WTC11 (cell line): ENCODE measurements at regions of chr22 and their contacts with region 1.

Region 1: GRCh38 chr22:39306581-39307361 is 12.7 kb downstream of the RPL3 start:
- DNase-seq: peak; percentile 78
- ATAC-seq: peak; percentile 1; the same call in 1 of the 2 replicates
- H3K4me3 Mint-ChIP-seq: no peak overlapping the region
- H3K27ac Mint-ChIP-seq: peak overlapping the region; percentile 55
- H3K4me1 Mint-ChIP-seq: peaks cover 25% of the 10 kb centered on the region
- H3K27me3 Mint-ChIP-seq: no peaks in the 10 kb centered on the region
- CTCF ChIP-seq: no peak

Region 2: DNA sequence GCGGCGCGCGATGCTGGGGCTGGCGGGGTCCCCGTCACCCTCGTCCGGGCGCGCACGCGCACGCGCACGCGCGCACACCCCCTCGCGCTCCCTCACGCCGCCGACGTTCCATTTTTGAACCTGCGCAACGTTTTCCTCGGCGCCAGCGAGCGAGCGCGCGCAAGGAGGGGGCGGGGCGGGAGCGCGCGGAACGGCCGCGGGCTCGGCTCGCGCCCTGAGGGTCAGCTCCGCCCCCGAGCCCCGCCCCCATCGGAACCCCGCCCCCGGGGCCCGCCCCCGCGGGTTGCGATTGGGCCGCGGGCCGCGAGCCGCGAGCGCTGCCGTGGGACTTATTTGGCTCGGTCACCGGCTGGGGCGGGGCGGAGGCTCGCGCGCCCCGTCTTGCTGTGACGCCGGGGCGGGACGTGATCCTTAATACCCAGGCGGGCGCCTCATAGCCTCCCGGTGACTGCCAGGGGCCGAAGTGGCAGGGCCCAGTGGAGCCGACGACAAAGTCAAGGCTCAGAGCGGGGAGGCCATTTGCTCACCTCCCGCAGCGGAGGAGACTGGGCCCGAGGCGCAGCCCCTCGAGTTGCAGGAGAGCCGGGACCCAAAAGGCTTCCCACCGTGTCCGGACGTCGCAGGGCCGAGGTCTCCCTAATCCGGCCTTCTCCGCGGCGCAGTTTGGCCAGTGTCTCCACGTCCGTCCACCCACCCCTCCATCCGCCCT is 154.1 kb before region 1 on chr22 and contains the start of gene CBX7:
- CTCF ChIA-PET with region 1: interaction called, 16 read pairs
- POLR2A ChIA-PET with region 1: interaction called, 3 read pairs
- DNase-seq: peak; percentile 87
- ATAC-seq: peak; percentile 68
- H3K4me3 Mint-ChIP-seq: peak within 1 kb of the TSS; percentile 71
- H3K27ac Mint-ChIP-seq: no peak within 1 kb of the TSS
- H3K4me1 Mint-ChIP-seq: peaks cover 26% of the 10 kb centered on the region
- H3K27me3 Mint-ChIP-seq: peaks cover 42% of the 10 kb centered on the region
- CTCF ChIP-seq: no peak
- total RNA-seq, gene CBX7: 10.6 to 11.1 TPM (median 10.6 TPM) in 3 replicates

Region 3: DNA sequence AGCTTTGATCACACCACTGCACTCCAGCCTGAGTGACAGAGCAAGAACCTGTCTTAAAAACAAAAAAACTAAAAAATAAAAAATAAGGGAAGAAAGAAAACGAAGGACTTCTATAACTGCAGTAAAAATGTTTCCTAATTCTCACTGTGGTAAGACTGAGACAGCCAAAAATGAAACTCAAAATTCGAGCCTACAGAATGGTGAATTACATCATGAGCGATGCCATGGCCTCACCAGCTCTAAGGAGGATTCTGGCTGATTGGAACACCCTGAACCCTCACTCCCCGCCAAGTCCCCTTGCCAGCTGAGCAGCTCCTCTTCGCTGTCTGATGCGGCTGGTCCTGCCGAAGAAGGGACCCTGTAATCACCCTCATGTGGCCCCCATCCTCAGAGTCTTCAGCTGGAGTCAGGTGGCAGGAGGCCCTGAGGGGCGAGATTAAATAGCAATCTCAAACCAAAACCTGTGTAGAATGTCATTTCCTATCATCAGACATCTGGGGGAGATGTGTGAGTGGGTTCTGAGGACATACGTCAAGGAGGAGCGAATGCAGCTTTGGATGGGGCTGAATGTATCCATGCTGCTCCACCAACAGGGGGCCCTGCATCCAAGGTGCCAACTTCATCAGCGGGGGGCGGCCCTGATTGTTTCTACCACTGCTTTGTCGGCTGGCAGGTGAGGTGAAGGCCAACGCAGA is 91.2 kb before region 1 on chr22:
- CTCF ChIA-PET with region 1: interaction called, 18 read pairs
- POLR2A ChIA-PET with region 1: interaction called, 8 read pairs
- DNase-seq: peak; percentile 58
- ATAC-seq: peak; percentile 22
- H3K4me3 Mint-ChIP-seq: no peak overlapping the region
- H3K27ac Mint-ChIP-seq: peak overlapping the region; percentile 99
- H3K4me1 Mint-ChIP-seq: peaks cover 43% of the 10 kb centered on the region
- H3K27me3 Mint-ChIP-seq: no peaks in the 10 kb centered on the region
- CTCF ChIP-seq: 0 out of 2 replicates have a peak, but pooled peaks have one; percentile 23

Region 4: DNA sequence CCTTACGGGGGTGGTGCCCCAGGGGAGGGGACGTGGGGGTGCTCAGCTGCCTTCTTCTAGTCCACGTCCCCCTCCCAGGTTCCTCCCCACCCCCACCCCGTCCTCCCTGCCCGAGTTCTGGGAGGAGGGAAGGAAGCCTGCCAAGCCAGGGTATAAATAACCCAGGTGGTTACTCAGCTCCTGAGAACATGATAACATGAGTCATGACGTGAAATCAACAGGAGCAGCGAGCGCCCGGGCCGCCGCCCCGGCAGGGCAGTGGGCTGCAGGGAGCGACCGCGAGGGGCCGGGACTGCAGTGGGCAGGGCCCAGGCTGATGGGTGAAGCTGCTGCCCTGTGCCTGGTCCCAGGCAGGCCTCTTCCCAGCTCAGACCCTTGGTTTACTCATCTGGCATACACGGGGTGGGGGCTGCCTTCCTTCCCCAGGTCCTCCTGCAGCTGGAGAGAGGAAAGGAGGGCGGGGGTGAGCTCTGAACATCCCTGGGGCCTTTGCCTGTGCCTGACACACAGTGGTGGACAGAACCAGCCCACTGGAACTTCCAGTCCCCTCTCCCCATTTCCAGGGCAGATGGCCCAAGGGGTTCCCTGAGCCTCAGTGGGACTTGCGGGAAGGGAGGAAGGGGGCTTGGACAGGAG is 53.2 kb before region 1 on chr22:
- CTCF ChIA-PET with region 1: interaction called, 20 read pairs
- POLR2A ChIA-PET with region 1: no interaction called
- DNase-seq: no peak
- ATAC-seq: peak; percentile 24
- H3K4me3 Mint-ChIP-seq: no peak overlapping the region
- H3K27ac Mint-ChIP-seq: no peak overlapping the region
- H3K4me1 Mint-ChIP-seq: peaks cover 36% of the 10 kb centered on the region
- H3K27me3 Mint-ChIP-seq: peaks cover 29% of the 10 kb centered on the region
- CTCF ChIP-seq: no peak

Region 5: GRCh38 chr22:39319270-39320022 is 12.7 kb after region 1 on chr22 and contains the start of gene RPL3:
- CTCF ChIA-PET with region 1: interaction called, 12 read pairs
- POLR2A ChIA-PET with region 1: interaction called, 31 read pairs
- DNase-seq: peak; percentile 93
- ATAC-seq: peak; percentile 64
- H3K4me3 Mint-ChIP-seq: peak within 1 kb of the TSS; percentile 99
- H3K27ac Mint-ChIP-seq: peak within 1 kb of the TSS; percentile 100
- H3K4me1 Mint-ChIP-seq: peaks cover 44% of the 10 kb centered on the region
- H3K27me3 Mint-ChIP-seq: peaks cover 4% of the 10 kb centered on the region; the same call in 1 of the 2 replicates
- CTCF ChIP-seq: no peak
- total RNA-seq, gene RPL3: 3,009 to 3,279 TPM (median 3,249 TPM) in 3 replicates

Region 6: GRCh38 chr22:39405346-39406085 is 98.7 kb after region 1 on chr22:
- CTCF ChIA-PET with region 1: no interaction called
- POLR2A ChIA-PET with region 1: no interaction called
- DNase-seq: no peak
- ATAC-seq: no peak
- H3K4me3 Mint-ChIP-seq: no peak overlapping the region
- H3K27ac Mint-ChIP-seq: peak overlapping the region; percentile 43; the same call in 1 of the 2 replicates
- H3K4me1 Mint-ChIP-seq: peaks cover 6% of the 10 kb centered on the region
- H3K27me3 Mint-ChIP-seq: no peaks in the 10 kb centered on the region
- CTCF ChIP-seq: no peak

Region 7: GRCh38 chr22:39528681-39529486 is 222.1 kb after region 1 on chr22:
- CTCF ChIA-PET with region 1: interaction called, 10 read pairs
- POLR2A ChIA-PET with region 1: interaction called, 3 read pairs
- DNase-seq: peak; percentile 94
- ATAC-seq: peak; percentile 8
- H3K4me3 Mint-ChIP-seq: no peak overlapping the region
- H3K27ac Mint-ChIP-seq: no peak overlapping the region
- H3K4me1 Mint-ChIP-seq: peaks cover 65% of the 10 kb centered on the region
- H3K27me3 Mint-ChIP-seq: no peaks in the 10 kb centered on the region
- CTCF ChIP-seq: peak; percentile 76